ENCODE measurements at regions of chr7 and their contacts with region 1.

Region 1: DNA sequence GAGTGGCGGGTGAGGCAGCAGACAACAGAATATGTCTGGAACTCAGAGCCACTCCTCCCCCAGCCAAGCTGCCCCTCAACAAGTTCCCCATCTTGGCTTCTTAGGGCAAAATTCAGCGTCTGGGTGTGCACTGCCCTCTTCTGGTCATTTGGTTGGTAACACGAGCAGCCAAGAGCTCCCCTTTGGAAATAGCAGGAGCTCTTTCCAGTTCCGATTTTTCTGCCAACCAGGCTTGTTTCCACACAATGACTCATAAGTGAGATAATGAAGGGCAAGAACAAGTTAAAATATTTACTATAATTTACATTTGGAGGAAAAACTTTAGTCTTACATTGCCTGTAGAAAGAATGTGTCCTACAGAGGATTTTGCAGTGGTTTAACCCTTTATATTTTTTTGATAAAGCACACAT is 70.5 kb downstream of the ADCYAP1R1 start:
- H3K4me3 ChIP-seq: no peak overlapping the region
- H3K27ac ChIP-seq: no peak overlapping the region
- H3K4me1 ChIP-seq: no peaks in the 10 kb centered on the region
- CTCF ChIP-seq: peak; percentile 36; the same call in 1 of the 2 replicates

Region 2: GRCh38 chr7:30938435-30939316 is 184.0 kb before region 1 on chr7:
- CTCF ChIA-PET with region 1: interaction called, 35 read pairs
- POLR2A ChIA-PET with region 1: no interaction called
- H3K4me3 ChIP-seq: no peak overlapping the region
- H3K27ac ChIP-seq: no peak overlapping the region
- H3K4me1 ChIP-seq: no peaks in the 10 kb centered on the region
- CTCF ChIP-seq: peak; percentile 67

Region 3: GRCh38 chr7:30974605-30975255 is 147.9 kb before region 1 on chr7:
- CTCF ChIA-PET with region 1: interaction called, 12 read pairs
- POLR2A ChIA-PET with region 1: no interaction called
- H3K4me3 ChIP-seq: no peak overlapping the region
- H3K27ac ChIP-seq: no peak overlapping the region
- H3K4me1 ChIP-seq: no peaks in the 10 kb centered on the region
- CTCF ChIP-seq: no peak

Region 4: DNA sequence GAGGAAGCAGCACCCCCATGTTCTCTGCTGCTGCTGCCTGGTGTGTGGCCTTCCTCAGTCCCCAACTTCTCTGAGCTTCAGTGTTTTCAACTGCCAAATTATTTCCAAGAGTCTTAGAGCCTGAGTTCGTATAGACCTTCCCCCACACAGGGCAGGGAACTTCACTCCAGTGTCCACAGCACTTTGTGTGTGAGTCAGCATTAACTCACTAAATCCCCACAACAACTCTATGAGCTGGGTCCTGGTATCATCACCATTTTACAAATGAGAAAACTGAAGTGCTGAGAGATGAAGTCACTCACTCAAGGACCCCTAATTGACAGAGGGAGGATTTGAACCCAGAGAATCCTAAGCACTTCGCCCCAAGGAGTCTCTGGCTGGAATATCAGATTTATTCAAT is 22.2 kb before region 1 on chr7:
- CTCF ChIA-PET with region 1: interaction called, 23 read pairs
- POLR2A ChIA-PET with region 1: no interaction called
- H3K4me3 ChIP-seq: no peak overlapping the region
- H3K27ac ChIP-seq: no peak overlapping the region
- H3K4me1 ChIP-seq: no peaks in the 10 kb centered on the region
- CTCF ChIP-seq: no peak

Region 5: DNA sequence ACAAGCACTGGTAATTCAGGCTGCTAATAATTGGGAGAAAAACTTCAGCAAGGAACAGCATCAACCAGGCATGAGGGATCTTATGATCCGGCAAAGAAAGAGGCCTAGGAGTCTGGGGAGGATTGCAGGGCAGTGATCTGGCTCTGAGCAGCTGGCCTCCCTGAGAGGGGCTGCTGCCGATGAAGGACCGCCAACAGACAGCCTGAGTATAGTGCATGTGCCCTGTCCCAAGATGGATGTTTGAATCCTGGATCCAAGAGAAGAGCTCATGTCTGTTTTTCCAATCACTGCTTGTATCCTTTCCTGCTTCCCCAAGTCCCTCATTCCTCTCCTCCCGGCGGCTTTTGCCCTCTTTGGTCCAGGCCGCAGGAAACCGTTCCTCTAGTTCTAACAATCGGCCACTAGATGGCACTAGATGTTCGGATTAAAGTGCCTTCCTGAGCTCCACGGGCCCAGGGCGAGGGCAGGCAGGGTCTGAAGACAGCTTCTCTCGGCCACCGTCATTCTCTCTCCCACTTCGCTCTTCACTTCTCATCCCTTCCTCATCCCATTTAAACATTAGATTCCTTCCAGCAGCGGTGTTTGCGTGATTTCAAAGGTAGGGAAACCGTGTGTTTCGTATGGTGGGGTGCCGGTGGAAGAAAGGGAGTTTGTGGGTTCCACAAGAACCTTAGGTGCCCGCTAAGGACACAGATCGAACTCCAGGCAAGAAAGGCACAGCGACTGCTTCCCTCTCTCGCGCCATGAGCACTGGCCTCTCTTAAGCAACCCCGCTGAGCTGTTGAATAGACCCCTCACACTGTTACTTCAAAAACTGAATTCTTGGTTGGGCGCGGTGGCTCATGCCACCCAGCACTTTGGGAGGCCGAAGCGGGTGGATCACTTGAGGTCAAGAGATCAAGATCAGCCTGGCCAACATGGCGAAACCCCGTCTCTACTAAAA is 11.9 kb after region 1 on chr7:
- CTCF ChIA-PET with region 1: interaction called, 58 read pairs
- POLR2A ChIA-PET with region 1: no interaction called
- H3K4me3 ChIP-seq: no peak overlapping the region
- H3K27ac ChIP-seq: no peak overlapping the region
- H3K4me1 ChIP-seq: no peaks in the 10 kb centered on the region
- CTCF ChIP-seq: no peak

Region 6: GRCh38 chr7:31251441-31251840 is 128.8 kb after region 1 on chr7:
- CTCF ChIA-PET with region 1: no interaction called
- POLR2A ChIA-PET with region 1: no interaction called
- H3K4me3 ChIP-seq: no peak overlapping the region
- H3K27ac ChIP-seq: no peak overlapping the region
- H3K4me1 ChIP-seq: no peaks in the 10 kb centered on the region
- CTCF ChIP-seq: no peak